Endothelial cell of umbilical vein (primary cell): ENCODE measurements at regions of chr9 and their contacts with region 1.

Region 1: GRCh38 chr9:27333241-27334052 is 36.5 kb upstream of the EQTN start:
- DNase-seq: peak; percentile 79
- H3K4me3 ChIP-seq: no peak overlapping the region
- H3K27ac ChIP-seq: no peak overlapping the region
- H3K4me1 ChIP-seq: no peaks in the 10 kb centered on the region
- H3K27me3 ChIP-seq: peaks cover 1 to 14% of the 10 kb centered on the region in 2 experiments
- CTCF ChIP-seq: peak; percentile 71 to 79
- POLR2A ChIP-seq: no peak

Region 2: DNA sequence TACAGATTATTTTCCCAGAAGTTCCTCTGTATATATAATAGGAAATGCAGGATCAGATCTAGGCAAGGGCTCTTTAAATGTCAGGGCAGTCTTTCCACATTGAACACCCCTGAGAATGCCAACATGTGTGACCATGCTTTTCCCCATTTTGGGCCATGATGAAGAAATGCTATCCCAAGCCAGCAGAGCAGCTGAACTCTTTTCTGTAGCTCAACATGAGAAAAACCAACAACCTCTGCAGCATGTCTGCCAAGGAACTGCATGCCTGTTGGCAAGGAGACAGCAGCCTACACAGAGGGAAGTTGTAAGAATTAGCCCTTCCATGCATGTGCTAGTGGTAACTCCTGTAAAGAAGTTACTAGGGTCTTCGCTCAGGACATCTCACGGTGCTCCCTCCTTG is 181.1 kb after region 1 on chr9:
- CTCF ChIA-PET with region 1: interaction called, 3 read pairs
- POLR2A ChIA-PET with region 1: no interaction called
- dilution Hi-C with region 1: loop called (anchors 25 kb)
- intact Hi-C with region 1: no loop called
- DNase-seq: no peak
- H3K4me3 ChIP-seq: no peak overlapping the region
- H3K27ac ChIP-seq: no peak overlapping the region
- H3K4me1 ChIP-seq: no peaks in the 10 kb centered on the region
- H3K27me3 ChIP-seq: peaks cover 0 to 3% of the 10 kb centered on the region in 2 experiments
- CTCF ChIP-seq: no peak
- POLR2A ChIP-seq: no peak

Region 3: GRCh38 chr9:27529316-27530278 is 196.2 kb after region 1 on chr9 and contains the start of gene MOB3B:
- CTCF ChIA-PET with region 1: interaction called, 114 read pairs
- POLR2A ChIA-PET with region 1: no interaction called
- dilution Hi-C with region 1: loop called (anchors 25 kb)
- intact Hi-C with region 1: loop called (anchors 1 kb)
- DNase-seq: peak; percentile 60
- H3K4me3 ChIP-seq: peak within 1 kb of the TSS; percentile 32 to 44 (median 32)
- H3K27ac ChIP-seq: no peak within 1 kb of the TSS
- H3K4me1 ChIP-seq: peaks cover 9% of the 10 kb centered on the region
- H3K27me3 ChIP-seq: peaks cover 19 to 35% of the 10 kb centered on the region in 2 experiments
- CTCF ChIP-seq: peak; percentile 84 to 90
- POLR2A ChIP-seq: no peak
- total RNA-seq, gene MOB3B: not detected in 2 replicates

Region 4: DNA sequence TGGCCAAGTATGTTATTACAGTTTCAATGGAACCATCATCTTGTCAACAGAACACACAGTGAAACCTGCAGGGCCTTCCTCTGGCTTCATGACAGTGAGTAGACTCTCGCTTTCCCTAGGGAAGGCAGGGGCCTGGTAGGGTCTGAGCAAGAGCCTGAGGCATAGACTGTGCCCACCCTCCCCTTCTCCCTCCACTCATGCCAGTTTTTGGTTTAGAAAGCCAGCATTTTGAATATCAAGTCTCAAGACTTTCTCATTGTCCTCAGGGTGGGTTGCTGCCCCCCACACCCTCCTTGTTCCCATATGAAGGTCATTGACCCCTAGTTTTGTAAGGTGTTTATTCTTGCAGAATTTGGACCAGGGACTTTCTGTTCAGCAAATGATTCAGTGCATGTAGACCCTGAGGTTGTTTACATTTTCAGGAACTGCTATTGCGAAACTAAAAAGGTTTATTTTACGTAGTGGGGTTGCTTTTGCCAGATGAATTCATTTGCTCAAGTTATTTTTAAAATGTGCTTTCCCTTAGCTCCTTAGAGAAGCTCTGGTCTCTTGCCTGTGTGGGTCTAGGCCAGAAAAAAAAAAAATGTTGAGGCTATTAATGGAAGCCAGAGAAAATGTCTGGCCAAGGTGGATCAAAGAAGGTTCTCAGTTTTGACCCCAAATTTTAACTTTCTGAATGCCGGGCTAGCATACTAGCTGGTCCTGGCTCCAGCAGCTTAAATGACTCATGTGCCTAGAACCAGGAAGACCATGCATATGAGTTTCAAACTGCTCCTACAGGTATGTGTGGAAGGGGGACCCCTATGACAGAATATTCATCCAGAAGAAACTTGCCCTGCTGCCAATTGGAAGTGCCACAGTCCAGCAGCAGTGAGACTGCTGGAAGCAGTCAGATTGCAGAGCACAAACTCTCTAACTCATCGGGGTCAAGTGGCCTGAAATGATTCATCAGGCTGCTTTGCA is 206.3 kb after region 1 on chr9:
- CTCF ChIA-PET with region 1: interaction called, 74 read pairs
- POLR2A ChIA-PET with region 1: no interaction called
- dilution Hi-C with region 1: no loop called
- intact Hi-C with region 1: no loop called
- DNase-seq: no peak
- H3K4me3 ChIP-seq: no peak overlapping the region
- H3K27ac ChIP-seq: no peak overlapping the region
- H3K4me1 ChIP-seq: no peaks in the 10 kb centered on the region
- H3K27me3 ChIP-seq: no peaks in the 10 kb centered on the region
- CTCF ChIP-seq: no peak
- POLR2A ChIP-seq: no peak

Region 5: GRCh38 chr9:27548055-27548741 is 214.8 kb after region 1 on chr9:
- CTCF ChIA-PET with region 1: interaction called, 74 read pairs
- POLR2A ChIA-PET with region 1: no interaction called
- dilution Hi-C with region 1: no loop called
- intact Hi-C with region 1: loop called (anchors 1 kb)
- DNase-seq: peak; percentile 41
- H3K4me3 ChIP-seq: no peak overlapping the region
- H3K27ac ChIP-seq: no peak overlapping the region
- H3K4me1 ChIP-seq: no peaks in the 10 kb centered on the region
- H3K27me3 ChIP-seq: no peaks in the 10 kb centered on the region
- CTCF ChIP-seq: peak in 1 of 2 donors; percentile 29
- POLR2A ChIP-seq: no peak

Region 6: GRCh38 chr9:27726244-27727081 is 393.0 kb after region 1 on chr9:
- CTCF ChIA-PET with region 1: no interaction called
- POLR2A ChIA-PET with region 1: no interaction called
- dilution Hi-C with region 1: no loop called
- intact Hi-C with region 1: loop called (anchors 10 kb)
- DNase-seq: peak; percentile 58
- H3K4me3 ChIP-seq: no peak overlapping the region
- H3K27ac ChIP-seq: no peak overlapping the region
- H3K4me1 ChIP-seq: no peaks in the 10 kb centered on the region
- H3K27me3 ChIP-seq: no peaks in the 10 kb centered on the region
- CTCF ChIP-seq: peak; percentile 37 to 68
- POLR2A ChIP-seq: no peak